Activated naive CD4-positive, alpha-beta T cell treated with anti-CD3 and anti-CD28 coated beads for 36 hours (primary cell): ENCODE measurements at regions of chr17 and their contacts with region 1.

Region 1: GRCh38 chr17:65198653-65199382 is 61.6 kb downstream of the RGS9 start:
- DNase-seq: no peak
- H3K4me3 Mint-ChIP-seq: no peak overlapping the region
- H3K27ac Mint-ChIP-seq: no peak overlapping the region
- H3K4me1 Mint-ChIP-seq: peaks cover 8% of the 10 kb centered on the region
- H3K27me3 Mint-ChIP-seq: no peaks in the 10 kb centered on the region

Region 2: DNA sequence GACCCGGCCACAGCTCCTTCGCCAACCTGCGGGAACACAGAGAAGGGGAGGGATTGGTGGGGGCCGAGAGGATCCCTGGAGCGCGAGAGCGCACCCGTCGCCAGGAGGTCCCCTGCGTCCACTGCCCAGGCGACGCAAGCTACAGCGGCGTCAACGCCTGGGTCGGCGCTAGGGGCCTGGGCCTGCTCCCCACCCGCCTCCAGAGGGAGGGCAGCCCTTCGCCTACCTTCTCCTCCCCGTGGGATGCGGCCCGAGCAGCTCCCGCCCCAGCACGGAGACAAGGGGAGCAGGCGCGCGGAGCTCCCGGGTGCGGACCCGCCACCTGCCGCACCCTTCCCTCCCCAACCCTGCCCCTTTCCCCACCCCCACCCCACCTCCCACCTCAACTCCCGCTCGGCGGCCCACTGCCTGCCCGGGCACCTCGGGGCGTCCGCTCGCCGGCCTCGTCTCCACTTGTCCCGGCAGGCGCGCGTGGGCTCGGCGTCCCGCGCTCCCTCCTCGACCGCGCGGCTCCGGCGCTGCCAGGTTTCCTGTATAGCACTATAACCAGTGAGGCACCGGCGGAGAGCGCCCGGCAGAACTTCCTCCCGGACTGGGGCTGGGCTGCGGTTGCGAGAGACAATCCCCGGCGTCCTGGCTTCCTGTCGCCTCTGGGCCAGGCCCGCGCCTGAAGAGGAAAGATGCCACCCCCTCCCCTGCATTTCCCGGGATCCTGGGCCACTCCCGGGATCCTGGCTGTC is 417.6 kb before region 1 on chr17:
- CTCF ChIA-PET with region 1: no interaction called
- intact Hi-C with region 1: loop called (anchors 5 kb)
- DNase-seq: peak; percentile 78
- H3K4me3 Mint-ChIP-seq: peak overlapping the region; percentile 70
- H3K27ac Mint-ChIP-seq: no peak overlapping the region
- H3K4me1 Mint-ChIP-seq: peaks cover 41% of the 10 kb centered on the region
- H3K27me3 Mint-ChIP-seq: peaks cover 9% of the 10 kb centered on the region

Region 3: GRCh38 chr17:64968652-64969501 is 229.9 kb before region 1 on chr17:
- CTCF ChIA-PET with region 1: interaction called, 3 read pairs
- intact Hi-C with region 1: loop called (anchors 1 kb)
- DNase-seq: peak; percentile 34
- H3K4me3 Mint-ChIP-seq: no peak overlapping the region
- H3K27ac Mint-ChIP-seq: peak overlapping the region; percentile 75
- H3K4me1 Mint-ChIP-seq: peaks cover 69% of the 10 kb centered on the region
- H3K27me3 Mint-ChIP-seq: no peaks in the 10 kb centered on the region

Region 4: DNA sequence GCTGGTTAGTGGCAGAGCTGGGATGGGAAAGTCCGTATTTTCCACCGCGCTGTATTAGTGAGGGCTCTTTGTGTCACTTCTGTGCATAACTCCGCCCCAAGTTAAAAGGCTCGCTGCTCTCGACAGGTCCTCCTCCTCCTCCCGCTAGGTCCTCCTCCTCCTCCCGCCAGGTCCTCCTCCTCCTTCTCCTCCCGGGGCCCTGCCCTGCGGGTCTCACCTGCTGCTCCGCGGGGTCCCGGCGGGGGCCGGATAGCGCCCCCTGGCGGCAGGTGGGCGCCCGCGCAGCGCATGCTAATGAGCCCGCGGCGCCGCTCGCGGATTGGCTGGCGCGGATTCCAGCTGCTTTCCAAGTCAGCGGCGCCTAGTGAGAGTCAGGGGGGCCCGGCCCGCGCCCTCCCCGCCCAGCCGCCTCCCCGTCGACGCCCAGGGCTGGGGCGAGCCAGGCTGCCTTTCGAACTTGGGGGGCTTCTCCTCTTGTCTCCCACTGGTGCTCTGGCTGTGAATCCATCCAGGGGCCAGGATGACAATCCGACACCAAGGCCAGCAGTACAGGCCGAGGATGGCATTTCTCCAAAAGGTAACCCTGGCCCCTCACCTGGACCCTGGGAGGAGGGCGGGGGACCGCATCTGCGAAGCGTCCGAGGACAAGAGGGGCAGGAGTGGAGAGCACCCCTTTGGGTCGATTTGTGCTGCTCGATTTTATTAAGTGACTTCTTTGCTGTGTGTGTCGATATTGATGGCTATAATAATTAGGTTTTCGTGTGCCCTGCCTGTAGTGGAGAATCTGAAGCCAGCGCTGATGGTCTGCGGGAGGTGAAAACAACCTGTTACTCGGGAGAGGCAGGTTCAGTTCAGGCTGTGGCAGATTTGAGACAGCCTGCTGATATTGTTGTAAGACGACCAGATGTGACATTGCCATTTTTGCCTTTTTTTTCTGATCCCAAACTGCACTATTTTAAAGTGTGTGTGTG is 61.5 kb before region 1 on chr17 and contains the start of gene RGS9:
- CTCF ChIA-PET with region 1: interaction called, 11 read pairs
- intact Hi-C with region 1: loop called (anchors 1 kb)
- DNase-seq: peak; percentile 75
- H3K4me3 Mint-ChIP-seq: peak within 1 kb of the TSS; percentile 59
- H3K27ac Mint-ChIP-seq: no peak within 1 kb of the TSS
- H3K4me1 Mint-ChIP-seq: peaks cover 15% of the 10 kb centered on the region
- H3K27me3 Mint-ChIP-seq: peaks cover 11% of the 10 kb centered on the region
- total RNA-seq, gene RGS9: 1.2 to 1.6 TPM